ENCODE measurements at regions of chr22 and their contacts with region 1.

Region 1: GRCh38 chr22:37229805-37230672 is 14.0 kb downstream of the RAC2 start:
- DNase-seq: peak; percentile 97
- H3K4me3 Mint-ChIP-seq: peak overlapping the region; percentile 67
- H3K27ac Mint-ChIP-seq: peak overlapping the region; percentile 98
- H3K4me1 Mint-ChIP-seq: peaks cover 90% of the 10 kb centered on the region
- H3K27me3 Mint-ChIP-seq: no peaks in the 10 kb centered on the region

Region 2: DNA sequence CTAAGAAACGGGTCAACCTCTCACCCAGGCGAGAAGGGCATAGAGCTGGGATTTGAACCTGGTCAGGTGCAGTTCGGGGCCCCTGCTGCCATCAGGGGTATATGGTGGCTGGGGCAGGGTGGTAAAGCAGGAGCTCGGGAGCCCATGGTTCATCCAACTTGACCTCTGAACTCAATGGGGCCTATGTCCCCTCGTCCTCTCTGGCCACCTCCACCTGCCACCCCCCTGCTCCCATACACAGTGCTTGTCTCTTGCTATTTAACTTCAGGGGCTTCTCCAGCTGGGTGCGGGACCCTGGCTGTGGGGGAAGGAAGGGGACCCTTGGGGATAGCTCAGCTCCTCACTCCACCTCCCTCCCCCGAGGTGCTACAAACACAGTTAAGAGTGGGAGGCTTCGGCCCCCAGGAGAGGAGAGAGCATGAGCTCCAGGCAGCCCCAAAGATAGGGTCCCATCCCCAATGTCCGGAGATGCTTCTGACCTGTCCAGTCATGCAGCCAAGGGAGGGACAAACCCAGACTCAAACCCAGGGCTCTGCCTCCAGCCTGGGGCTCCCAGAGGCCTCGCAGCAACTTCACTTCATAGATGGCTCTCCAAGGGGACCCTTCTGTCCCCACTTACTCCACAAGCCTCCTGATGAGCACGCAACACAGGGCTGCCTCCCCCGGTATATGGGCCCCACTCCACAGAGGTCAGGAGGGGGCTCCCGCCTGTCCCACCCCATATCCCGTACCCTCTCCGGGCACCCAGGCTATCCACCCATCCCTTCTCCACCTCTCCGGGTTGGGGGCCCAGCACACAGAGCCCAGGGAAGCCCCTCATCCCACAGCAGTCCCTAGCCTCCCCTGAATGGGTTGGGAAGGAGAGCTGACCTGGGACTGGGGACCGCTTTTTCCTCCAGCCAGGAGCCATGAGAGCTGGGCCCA is 81.0 kb before region 1 on chr22:
- CTCF ChIA-PET with region 1: interaction called, 4 read pairs
- POLR2A ChIA-PET with region 1: interaction called, 16 read pairs
- intact Hi-C with region 1: no loop called
- DNase-seq: no peak
- H3K4me3 Mint-ChIP-seq: peak overlapping the region; percentile 95
- H3K27ac Mint-ChIP-seq: peak overlapping the region; percentile 95
- H3K4me1 Mint-ChIP-seq: peaks cover 56% of the 10 kb centered on the region
- H3K27me3 Mint-ChIP-seq: no peaks in the 10 kb centered on the region

Region 3: GRCh38 chr22:37218771-37219411 is 11.1 kb before region 1 on chr22:
- CTCF ChIA-PET with region 1: interaction called, 3 read pairs
- POLR2A ChIA-PET with region 1: interaction called, 30 read pairs
- intact Hi-C with region 1: loop called (anchors 1 kb)
- DNase-seq: peak; percentile 85
- H3K4me3 Mint-ChIP-seq: peak overlapping the region; percentile 76
- H3K27ac Mint-ChIP-seq: peak overlapping the region; percentile 95
- H3K4me1 Mint-ChIP-seq: peaks cover 76% of the 10 kb centered on the region
- H3K27me3 Mint-ChIP-seq: no peaks in the 10 kb centered on the region

Region 4: GRCh38 chr22:37303821-37304274 is 73.8 kb after region 1 on chr22:
- CTCF ChIA-PET with region 1: no interaction called
- POLR2A ChIA-PET with region 1: no interaction called
- intact Hi-C with region 1: no loop called
- DNase-seq: peak; percentile 90
- H3K4me3 Mint-ChIP-seq: no peak overlapping the region
- H3K27ac Mint-ChIP-seq: peak overlapping the region; percentile 91
- H3K4me1 Mint-ChIP-seq: peaks cover 89% of the 10 kb centered on the region
- H3K27me3 Mint-ChIP-seq: no peaks in the 10 kb centered on the region

Region 5: GRCh38 chr22:37647928-37648327 is 417.9 kb after region 1 on chr22:
- CTCF ChIA-PET with region 1: no interaction called
- POLR2A ChIA-PET with region 1: no interaction called
- intact Hi-C with region 1: no loop called
- DNase-seq: no peak
- H3K4me3 Mint-ChIP-seq: no peak overlapping the region
- H3K27ac Mint-ChIP-seq: no peak overlapping the region
- H3K4me1 Mint-ChIP-seq: peaks cover 10% of the 10 kb centered on the region
- H3K27me3 Mint-ChIP-seq: no peaks in the 10 kb centered on the region

Measured in activated CD4-positive, alpha-beta memory T cell treated with anti-CD3 and anti-CD28 coated beads for 36 hours (primary cell).